ENCODE measurements at regions of chr7 and their contacts with region 1.

Region 1: GRCh38 chr7:65037740-65038678 is 31.5 kb upstream of the ERV3-1 start:
- DNase-seq: peak; percentile 85 to 92 (median 88)
- ATAC-seq: peak; percentile 95
- H3K4me3 ChIP-seq: no peak overlapping the region
- H3K4me3 Mint-ChIP-seq: peak overlapping the region; percentile 77 to 87 (median 82)
- H3K27ac ChIP-seq: peak overlapping the region; percentile 80
- H3K27ac Mint-ChIP-seq: peak overlapping the region; percentile 10 to 91 (median 83)
- H3K4me1 ChIP-seq: peaks cover 0 to 8% of the 10 kb centered on the region in 2 donors
- H3K4me1 Mint-ChIP-seq: peaks cover 7 to 18% (median 15%) of the 10 kb centered on the region in 7 donors
- H3K27me3 ChIP-seq: no peaks in the 10 kb centered on the region
- H3K27me3 Mint-ChIP-seq: no peaks in the 10 kb centered on the region

Region 2: DNA sequence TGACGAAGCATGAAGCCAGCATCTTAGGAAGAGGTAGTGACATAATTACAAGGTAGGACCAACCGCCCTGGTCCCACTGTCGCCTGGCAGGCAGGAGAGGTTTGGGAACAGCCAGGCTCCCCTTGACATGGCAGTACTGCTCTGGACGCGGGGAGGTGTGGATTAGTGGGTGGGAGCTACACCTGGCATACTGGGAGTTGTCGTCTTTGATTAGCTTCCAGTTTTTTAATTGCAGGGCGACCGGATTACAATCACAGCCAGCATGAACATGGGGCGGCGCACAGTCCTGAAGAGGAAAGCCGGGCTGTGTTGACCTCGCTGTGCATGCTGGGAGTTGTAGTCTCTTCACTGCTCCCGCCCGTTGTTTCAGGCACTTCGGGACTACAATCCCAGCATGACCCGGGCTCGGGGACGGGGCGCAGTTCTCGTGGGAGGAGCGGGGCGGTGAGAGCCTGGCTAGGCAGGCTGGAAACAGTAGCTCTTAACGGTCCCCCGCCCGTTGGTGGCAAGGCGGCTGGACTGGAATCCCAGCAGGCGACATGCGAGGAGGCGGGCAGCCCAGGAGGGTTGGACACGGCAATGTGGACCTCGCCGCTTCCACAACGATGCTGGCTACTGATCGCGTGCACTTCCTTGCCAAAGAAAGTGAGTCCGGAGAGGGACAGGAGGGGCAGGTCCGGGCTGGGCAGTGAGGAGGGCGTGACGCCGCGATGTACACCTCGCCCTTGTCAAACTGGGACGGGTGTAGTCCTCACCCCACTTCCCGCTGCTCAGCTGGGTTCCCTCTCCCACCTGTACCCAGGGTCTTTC is 1137.4 kb before region 1 on chr7:
- CTCF ChIA-PET with region 1: no interaction called
- POLR2A ChIA-PET with region 1: no interaction called
- intact Hi-C with region 1: loop called in 1 of 2 experiments (anchors 1 kb)
- DNase-seq: peak; percentile 64 to 95 (median 91)
- ATAC-seq: peak; percentile 97
- H3K4me3 ChIP-seq: peak overlapping the region; percentile 84
- H3K4me3 Mint-ChIP-seq: peak overlapping the region; percentile 82 to 100 (median 98)
- H3K27ac ChIP-seq: peak overlapping the region; percentile 89
- H3K27ac Mint-ChIP-seq: peak overlapping the region; percentile 88 to 99 (median 95)
- H3K4me1 ChIP-seq: no peaks in the 10 kb centered on the region
- H3K4me1 Mint-ChIP-seq: peaks cover 0 to 22% (median 9%) of the 10 kb centered on the region in 7 donors
- H3K27me3 ChIP-seq: no peaks in the 10 kb centered on the region
- H3K27me3 Mint-ChIP-seq: peaks cover 0 to 4% (median 0%) of the 10 kb centered on the region in 5 donors

Region 3: GRCh38 chr7:64307254-64308015 is 730.6 kb before region 1 on chr7:
- CTCF ChIA-PET with region 1: no interaction called
- POLR2A ChIA-PET with region 1: interaction called, 10 read pairs
- intact Hi-C with region 1: loop called (anchors 1 kb)
- DNase-seq: peak; percentile 76 to 95 (median 93)
- ATAC-seq: peak; percentile 99
- H3K4me3 ChIP-seq: peak overlapping the region; percentile 95
- H3K4me3 Mint-ChIP-seq: peak overlapping the region; percentile 90 to 100 (median 96)
- H3K27ac ChIP-seq: peak overlapping the region; percentile 83
- H3K27ac Mint-ChIP-seq: peak overlapping the region; percentile 94 to 99 (median 97)
- H3K4me1 ChIP-seq: peaks cover 0 to 13% of the 10 kb centered on the region in 2 donors
- H3K4me1 Mint-ChIP-seq: peaks cover 13 to 30% (median 19%) of the 10 kb centered on the region in 7 donors
- H3K27me3 ChIP-seq: no peaks in the 10 kb centered on the region
- H3K27me3 Mint-ChIP-seq: no peaks in the 10 kb centered on the region

Region 4: DNA sequence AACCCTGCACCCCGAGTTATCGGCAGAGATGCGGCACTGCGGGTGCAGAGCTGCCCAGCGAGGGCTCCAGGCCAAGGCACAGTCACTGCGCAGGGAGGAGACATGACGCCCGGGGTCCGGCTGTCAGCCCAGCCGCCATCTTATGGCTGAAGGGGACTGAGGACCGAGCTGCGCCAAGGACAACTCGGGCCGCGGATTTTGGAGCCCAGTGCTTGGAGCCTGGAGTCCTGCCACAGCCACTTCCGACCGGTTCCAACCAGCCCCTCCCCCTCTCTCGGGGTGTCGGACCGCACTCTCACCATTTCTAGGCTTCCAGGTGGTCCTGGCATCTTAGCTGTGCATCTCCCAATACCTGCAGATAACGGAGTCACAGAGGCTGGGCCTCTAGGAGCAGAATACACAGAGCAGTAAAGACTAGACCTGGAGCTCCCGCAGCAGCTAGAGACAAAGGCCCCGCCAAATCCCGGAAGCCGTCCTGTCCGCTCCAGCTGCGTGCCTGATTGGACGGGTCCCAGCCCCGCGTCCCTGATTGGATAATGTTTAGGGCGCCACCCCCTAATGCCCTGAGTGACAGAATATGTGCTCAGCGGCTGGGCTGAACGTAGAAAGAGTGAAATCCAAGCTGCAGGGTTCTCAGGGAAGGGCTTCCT is 475.3 kb before region 1 on chr7 and contains the start of gene ZNF680:
- CTCF ChIA-PET with region 1: no interaction called
- POLR2A ChIA-PET with region 1: interaction called, 3 read pairs
- intact Hi-C with region 1: loop called in 1 of 2 experiments (anchors 2 kb)
- DNase-seq: peak; percentile 64 to 93 (median 88)
- ATAC-seq: peak; percentile 99
- H3K4me3 ChIP-seq: peak within 1 kb of the TSS; percentile 95
- H3K4me3 Mint-ChIP-seq: peak within 1 kb of the TSS; percentile 93 to 100 (median 99)
- H3K27ac ChIP-seq: peak within 1 kb of the TSS; percentile 67
- H3K27ac Mint-ChIP-seq: peak within 1 kb of the TSS; percentile 89 to 98 (median 97)
- H3K4me1 ChIP-seq: no peaks in the 10 kb centered on the region
- H3K4me1 Mint-ChIP-seq: peaks cover 14 to 41% (median 35%) of the 10 kb centered on the region in 7 donors
- H3K27me3 ChIP-seq: no peaks in the 10 kb centered on the region
- H3K27me3 Mint-ChIP-seq: no peaks in the 10 kb centered on the region
- total RNA-seq, gene ZNF680: 10.0 to 20.4 (median 12.0) TPM

Region 5: DNA sequence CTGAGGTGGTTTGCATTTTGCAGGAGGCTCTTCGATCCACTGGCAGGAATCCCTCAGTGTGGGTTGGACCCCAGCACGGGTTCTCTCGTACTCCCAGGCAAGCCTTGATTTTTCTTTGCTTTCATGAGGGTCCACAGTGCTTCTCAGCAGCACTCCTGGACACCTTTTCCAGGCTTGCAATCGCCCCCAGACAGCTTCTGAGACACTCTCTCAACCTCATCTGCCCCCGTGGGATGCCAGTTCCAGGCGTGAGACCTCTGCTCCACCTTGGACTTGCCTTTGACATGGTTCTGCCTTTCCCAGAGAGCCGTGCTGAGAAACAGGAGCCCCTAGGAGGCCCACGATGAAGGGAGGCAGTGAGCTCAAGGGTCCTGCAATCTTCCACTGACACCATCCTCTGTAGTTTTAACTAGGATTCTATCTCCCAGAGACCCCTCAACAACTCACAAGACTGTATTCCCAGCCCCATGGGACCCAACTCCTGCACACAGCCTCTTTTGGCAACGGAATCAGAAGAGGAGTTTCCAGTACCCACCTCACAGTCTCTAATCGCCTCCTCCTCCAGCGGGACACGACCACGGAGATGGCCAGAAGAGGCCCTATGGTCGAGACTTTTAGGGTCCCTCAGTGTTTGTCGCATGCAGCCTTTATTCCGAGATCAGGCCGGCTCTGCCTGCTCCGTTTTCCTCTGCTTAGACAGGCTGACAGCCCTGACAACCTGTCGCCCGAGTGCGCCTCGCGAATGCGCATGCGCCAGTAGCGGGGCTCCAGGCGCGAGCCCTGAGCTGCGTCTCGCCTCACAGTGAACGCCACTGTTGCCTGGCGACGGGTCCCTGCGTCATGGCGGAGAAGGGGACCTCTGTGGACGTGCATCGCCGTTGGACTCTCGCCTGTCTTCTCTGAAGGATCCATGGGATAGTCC is 161.0 kb before region 1 on chr7:
- CTCF ChIA-PET with region 1: no interaction called
- POLR2A ChIA-PET with region 1: no interaction called
- intact Hi-C with region 1: no loop called
- DNase-seq: peak; percentile 49 to 68 (median 57)
- ATAC-seq: peak; percentile 84
- H3K4me3 ChIP-seq: peak overlapping the region; percentile 54
- H3K4me3 Mint-ChIP-seq: peak overlapping the region; percentile 53 to 81 (median 76)
- H3K27ac ChIP-seq: no peak overlapping the region
- H3K27ac Mint-ChIP-seq: peak overlapping the region in 5 of 9 donors; percentile 14 to 68 (median 48)
- H3K4me1 ChIP-seq: no peaks in the 10 kb centered on the region
- H3K4me1 Mint-ChIP-seq: peaks cover 3 to 12% (median 8%) of the 10 kb centered on the region in 7 donors
- H3K27me3 ChIP-seq: no peaks in the 10 kb centered on the region
- H3K27me3 Mint-ChIP-seq: peaks cover 6 to 57% (median 25%) of the 10 kb centered on the region in 5 donors

Region 6: GRCh38 chr7:65006094-65006992 is 31.7 kb before region 1 on chr7 and contains the start of gene ERV3-1:
- CTCF ChIA-PET with region 1: interaction called, 3 read pairs
- POLR2A ChIA-PET with region 1: interaction called, 20 read pairs
- intact Hi-C with region 1: loop called (anchors 1 kb)
- DNase-seq: peak; percentile 76 to 96 (median 93)
- ATAC-seq: peak; percentile 99
- H3K4me3 ChIP-seq: peak within 1 kb of the TSS; percentile 72
- H3K4me3 Mint-ChIP-seq: peak within 1 kb of the TSS; percentile 75 to 96 (median 94)
- H3K27ac ChIP-seq: peak within 1 kb of the TSS; percentile 81
- H3K27ac Mint-ChIP-seq: peak within 1 kb of the TSS; percentile 73 to 98 (median 94)
- H3K4me1 ChIP-seq: peaks cover 4 to 21% of the 10 kb centered on the region in 2 donors
- H3K4me1 Mint-ChIP-seq: peaks cover 26 to 57% (median 45%) of the 10 kb centered on the region in 7 donors
- H3K27me3 ChIP-seq: no peaks in the 10 kb centered on the region
- H3K27me3 Mint-ChIP-seq: no peaks in the 10 kb centered on the region
- total RNA-seq, gene ERV3-1: 12.2 to 22.9 (median 14.9) TPM

Region 7: GRCh38 chr7:66114793-66115649 is 1077.0 kb after region 1 on chr7 and contains the start of gene CRCP:
- CTCF ChIA-PET with region 1: no interaction called
- POLR2A ChIA-PET with region 1: no interaction called
- intact Hi-C with region 1: loop called in 1 of 2 experiments (anchors 10 kb)
- DNase-seq: peak; percentile 78 to 87 (median 83)
- ATAC-seq: peak; percentile 94
- H3K4me3 ChIP-seq: peak within 1 kb of the TSS; percentile 87
- H3K4me3 Mint-ChIP-seq: peak within 1 kb of the TSS; percentile 94 to 98 (median 96)
- H3K27ac ChIP-seq: peak within 1 kb of the TSS; percentile 95
- H3K27ac Mint-ChIP-seq: peak within 1 kb of the TSS; percentile 94 to 98 (median 96)
- H3K4me1 ChIP-seq: peaks cover 14 to 26% of the 10 kb centered on the region in 2 donors
- H3K4me1 Mint-ChIP-seq: peaks cover 28 to 56% (median 47%) of the 10 kb centered on the region in 7 donors
- H3K27me3 ChIP-seq: no peaks in the 10 kb centered on the region
- H3K27me3 Mint-ChIP-seq: no peaks in the 10 kb centered on the region
- total RNA-seq, gene CRCP: 29.8 to 37.9 (median 34.0) TPM

Measured in naive thymus-derived CD4-positive, alpha-beta T cell (primary cell).